CD4-positive, alpha-beta memory T cell (primary cell): ENCODE measurements at regions of chr1 and their contacts with region 1.

Region 1: DNA sequence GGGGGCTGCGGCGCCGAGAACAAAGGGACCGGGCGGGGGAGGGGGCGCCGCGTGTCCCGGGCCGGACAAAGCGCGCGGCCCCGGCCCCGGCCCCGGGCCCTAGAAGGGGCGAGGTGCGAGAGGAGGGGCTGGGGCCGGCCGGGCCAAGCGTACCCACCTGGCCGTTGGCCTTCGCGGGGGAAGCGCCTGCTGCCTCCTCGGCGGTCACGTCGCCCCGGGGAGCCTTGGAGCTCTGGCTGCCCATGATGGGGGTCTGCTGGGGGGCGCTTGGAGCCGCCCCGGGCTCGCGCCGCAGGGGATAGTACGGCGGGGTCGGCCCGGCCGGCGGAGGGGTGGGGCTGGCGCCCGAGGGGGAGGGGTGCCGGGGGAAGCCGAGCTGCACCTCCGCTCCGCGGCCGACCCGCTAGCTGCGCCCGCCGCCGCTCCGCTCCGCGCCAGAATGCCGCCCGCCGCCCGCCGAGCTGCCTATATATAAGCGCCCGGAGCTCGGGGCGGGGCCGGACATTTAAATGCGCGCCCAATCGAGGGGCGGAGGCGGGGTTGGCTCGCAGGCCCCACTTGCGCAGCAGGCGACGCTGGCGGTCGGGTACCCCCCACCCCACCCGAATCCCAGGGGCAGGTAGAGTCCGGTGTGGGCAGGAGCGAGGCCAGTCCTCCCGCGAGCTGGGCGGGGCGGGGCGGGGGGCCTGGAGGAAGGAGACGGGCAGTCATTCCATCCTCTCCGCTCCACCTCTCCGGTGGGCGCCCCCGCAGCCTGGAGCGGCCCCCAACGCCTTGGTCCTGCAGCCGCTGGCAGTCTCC is at the start of gene MARCKSL1:
- DNase-seq: peak; percentile 82 to 85 (median 85)
- H3K4me3 ChIP-seq: peak within 1 kb of the TSS; percentile 29 to 48
- H3K4me3 Mint-ChIP-seq: peak within 1 kb of the TSS; percentile 83 to 92 (median 87)
- H3K27ac ChIP-seq: peak within 1 kb of the TSS; percentile 45
- H3K27ac Mint-ChIP-seq: peak within 1 kb of the TSS; percentile 31 to 95 (median 85)
- H3K4me1 ChIP-seq: peaks cover 40% of the 10 kb centered on the region
- H3K4me1 Mint-ChIP-seq: peaks cover 26 to 44% (median 34%) of the 10 kb centered on the region in 4 donors
- H3K27me3 ChIP-seq: no peaks in the 10 kb centered on the region
- H3K27me3 Mint-ChIP-seq: no peaks in the 10 kb centered on the region
- total RNA-seq, gene MARCKSL1: 46.5 to 47.3 TPM

Region 2: DNA sequence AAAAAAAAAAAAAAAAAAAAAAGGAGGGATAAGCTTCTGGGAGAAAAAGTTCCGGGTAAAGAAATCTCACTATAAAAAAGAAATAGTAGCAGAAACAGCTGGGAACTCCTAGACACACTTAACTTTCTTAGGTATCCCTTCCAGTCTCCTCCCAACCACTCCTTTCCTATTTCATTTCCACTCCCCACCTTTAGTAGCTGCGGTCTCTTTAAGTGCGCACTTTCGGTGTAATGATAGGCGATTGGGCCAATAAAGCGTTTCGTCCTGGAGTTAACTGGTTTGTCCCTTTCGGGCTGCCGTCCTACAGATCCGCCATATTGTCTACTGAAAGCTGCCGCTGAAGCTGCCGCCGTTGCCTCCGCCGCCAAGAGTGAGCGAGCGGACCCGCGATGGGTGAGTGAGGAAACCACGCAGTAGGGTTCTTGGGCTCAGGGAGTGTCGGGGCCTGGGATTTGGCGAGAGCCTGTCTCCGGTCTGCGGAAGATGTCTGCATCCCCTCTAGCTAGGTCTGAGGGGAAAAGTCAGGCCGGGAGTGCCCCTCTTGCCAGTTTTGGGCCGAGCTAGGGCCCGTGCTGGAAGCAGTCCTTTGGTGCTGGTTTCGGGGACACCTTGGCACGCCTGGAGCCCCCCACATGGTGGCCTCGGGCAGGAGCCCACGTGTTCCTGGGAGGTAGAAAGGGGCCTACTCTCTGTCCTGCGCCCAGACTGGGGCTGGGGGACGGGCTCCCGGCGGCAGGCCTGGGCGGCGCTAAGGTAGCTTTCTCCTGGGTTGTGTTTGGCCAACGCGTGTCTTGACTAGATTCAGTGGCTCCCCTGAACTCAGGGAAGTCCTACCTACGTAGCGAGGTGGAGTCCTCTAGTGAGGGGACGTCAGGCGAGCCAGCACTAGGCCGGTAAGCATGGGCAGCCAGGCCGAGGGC is 228.0 kb before region 1 on chr1 and contains the start of gene KPNA6:
- CTCF ChIA-PET with region 1: no interaction called
- POLR2A ChIA-PET with region 1: interaction called, 12 read pairs
- intact Hi-C with region 1: no loop called
- DNase-seq: peak; percentile 93 to 95 (median 94)
- H3K4me3 ChIP-seq: peak within 1 kb of the TSS; percentile 67 to 83
- H3K4me3 Mint-ChIP-seq: peak within 1 kb of the TSS; percentile 96 to 100 (median 100)
- H3K27ac ChIP-seq: peak within 1 kb of the TSS; percentile 94
- H3K27ac Mint-ChIP-seq: peak within 1 kb of the TSS; percentile 93 to 100 (median 97)
- H3K4me1 ChIP-seq: peaks cover 47% of the 10 kb centered on the region
- H3K4me1 Mint-ChIP-seq: peaks cover 31 to 62% (median 45%) of the 10 kb centered on the region in 4 donors
- H3K27me3 ChIP-seq: no peaks in the 10 kb centered on the region
- H3K27me3 Mint-ChIP-seq: no peaks in the 10 kb centered on the region
- total RNA-seq, gene KPNA6: 60.3 to 62.5 TPM

Region 3: GRCh38 chr1:32321712-32322291 is 14.2 kb before region 1 on chr1:
- CTCF ChIA-PET with region 1: interaction called, 14 read pairs
- POLR2A ChIA-PET with region 1: interaction called, 79 read pairs
- intact Hi-C with region 1: loop called (anchors 2 kb)
- DNase-seq: peak; percentile 55 to 66 (median 59)
- H3K4me3 ChIP-seq: no peak overlapping the region
- H3K4me3 Mint-ChIP-seq: peak overlapping the region; percentile 72 to 85 (median 78)
- H3K27ac ChIP-seq: peak overlapping the region; percentile 18
- H3K27ac Mint-ChIP-seq: peak overlapping the region; percentile 88 to 96 (median 90)
- H3K4me1 ChIP-seq: peaks cover 63% of the 10 kb centered on the region
- H3K4me1 Mint-ChIP-seq: peaks cover 26 to 55% (median 42%) of the 10 kb centered on the region in 4 donors
- H3K27me3 ChIP-seq: no peaks in the 10 kb centered on the region
- H3K27me3 Mint-ChIP-seq: no peaks in the 10 kb centered on the region

Region 4: DNA sequence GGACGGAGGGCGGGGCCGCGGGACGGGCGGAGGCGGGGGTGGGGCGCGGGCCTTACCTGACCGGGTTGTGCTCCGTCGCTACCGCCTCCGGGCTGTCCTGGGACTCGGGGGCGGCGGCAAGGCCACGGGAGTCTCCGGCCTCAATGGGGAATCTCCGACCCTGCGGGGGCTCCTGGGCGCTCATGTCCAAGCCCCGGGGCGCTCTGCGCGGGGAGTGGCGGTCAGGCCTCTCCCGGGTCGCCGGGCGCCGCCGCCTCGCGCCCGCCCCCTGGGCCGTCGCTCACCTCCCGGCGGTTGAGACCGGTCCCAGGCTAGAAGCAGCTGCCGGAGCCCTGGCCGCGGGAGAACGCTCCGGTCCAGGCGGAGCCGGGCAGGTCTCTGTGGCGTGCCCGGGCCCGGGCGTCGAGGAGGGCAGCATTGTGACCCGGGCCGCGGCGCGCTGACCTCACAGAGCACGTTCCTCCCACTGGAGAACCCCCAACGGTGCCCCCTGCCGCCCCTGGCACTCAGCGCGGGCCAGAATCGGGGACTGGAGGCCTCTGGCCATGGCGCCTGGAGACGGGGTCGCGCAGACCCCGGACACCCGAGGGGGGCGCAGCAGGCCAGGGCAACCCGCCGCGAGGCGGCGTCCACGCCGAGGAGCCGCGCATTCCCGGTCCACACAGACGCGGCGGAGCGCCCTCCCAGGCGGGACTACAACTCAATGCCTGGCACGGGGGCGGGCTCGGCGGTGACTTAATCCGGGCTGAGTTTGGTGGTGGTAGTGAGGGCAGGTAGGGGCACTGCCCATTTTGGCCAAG is 25.9 kb after region 1 on chr1:
- CTCF ChIA-PET with region 1: interaction called, 3 read pairs
- POLR2A ChIA-PET with region 1: interaction called, 16 read pairs
- intact Hi-C with region 1: no loop called
- DNase-seq: peak in 3 of 5 donors; percentile 10 to 38 (median 25)
- H3K4me3 ChIP-seq: peak overlapping the region in 1 of 2 donors; percentile 10
- H3K4me3 Mint-ChIP-seq: peak overlapping the region in 6 of 8 donors; percentile 42 to 70 (median 59)
- H3K27ac ChIP-seq: no peak overlapping the region
- H3K27ac Mint-ChIP-seq: peak overlapping the region in 1 of 7 donors; percentile 52
- H3K4me1 ChIP-seq: peaks cover 18% of the 10 kb centered on the region
- H3K4me1 Mint-ChIP-seq: peaks cover 11 to 31% (median 21%) of the 10 kb centered on the region in 4 donors
- H3K27me3 ChIP-seq: no peaks in the 10 kb centered on the region
- H3K27me3 Mint-ChIP-seq: peaks cover 3% of the 10 kb centered on the region in 2 donors

Region 5: DNA sequence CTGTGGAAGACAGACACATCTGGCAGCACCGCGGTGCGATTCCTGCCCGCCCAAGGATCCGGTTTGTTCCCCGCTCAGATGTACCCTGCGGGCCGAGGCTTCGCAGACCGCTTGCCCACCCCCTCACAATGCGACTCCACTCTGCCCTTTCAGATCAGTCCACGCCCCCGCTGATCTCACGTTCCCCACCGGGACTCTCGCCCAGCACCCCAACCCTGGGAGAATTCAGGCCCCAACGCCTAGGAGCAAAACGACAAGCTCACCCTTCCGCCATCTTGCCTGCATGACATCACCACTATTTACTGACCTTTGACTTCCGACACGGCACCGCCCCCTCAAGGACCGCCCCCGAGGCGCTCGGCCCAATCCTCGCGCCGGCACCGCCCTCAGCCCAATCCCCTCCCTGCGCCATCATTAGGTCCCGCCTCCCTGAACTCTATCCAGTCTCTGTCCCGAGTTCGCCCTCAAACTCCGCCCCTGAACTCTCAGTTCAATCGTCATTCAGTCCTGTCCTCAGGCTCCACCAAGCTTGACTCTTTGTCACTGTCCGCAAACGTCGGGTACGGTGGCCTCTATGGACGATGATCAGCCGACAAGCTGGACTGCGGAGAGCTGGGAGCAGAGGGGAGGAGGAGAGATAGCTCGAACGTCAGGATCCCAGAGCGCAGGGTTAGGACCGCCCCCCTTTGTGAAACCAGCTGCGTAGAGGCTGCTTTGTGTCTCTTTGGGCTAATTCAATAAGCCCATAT is 58.3 kb after region 1 on chr1 and contains the start of gene BSDC1:
- CTCF ChIA-PET with region 1: interaction called, 3 read pairs
- POLR2A ChIA-PET with region 1: interaction called, 23 read pairs
- intact Hi-C with region 1: loop called (anchors 2 kb)
- DNase-seq: peak; percentile 98 to 99 (median 99)
- H3K4me3 ChIP-seq: peak within 1 kb of the TSS; percentile 87
- H3K4me3 Mint-ChIP-seq: peak within 1 kb of the TSS; percentile 99 to 100 (median 100)
- H3K27ac ChIP-seq: peak within 1 kb of the TSS; percentile 95
- H3K27ac Mint-ChIP-seq: peak within 1 kb of the TSS; percentile 92 to 100 (median 100)
- H3K4me1 ChIP-seq: peaks cover 43% of the 10 kb centered on the region
- H3K4me1 Mint-ChIP-seq: peaks cover 5 to 25% (median 19%) of the 10 kb centered on the region in 4 donors
- H3K27me3 ChIP-seq: no peaks in the 10 kb centered on the region
- H3K27me3 Mint-ChIP-seq: peaks cover 0 to 1% of the 10 kb centered on the region in 2 donors
- total RNA-seq, gene BSDC1: 106 to 112 TPM